ENCODE measurements at regions of chr2 and their contacts with region 1.

Region 1: DNA sequence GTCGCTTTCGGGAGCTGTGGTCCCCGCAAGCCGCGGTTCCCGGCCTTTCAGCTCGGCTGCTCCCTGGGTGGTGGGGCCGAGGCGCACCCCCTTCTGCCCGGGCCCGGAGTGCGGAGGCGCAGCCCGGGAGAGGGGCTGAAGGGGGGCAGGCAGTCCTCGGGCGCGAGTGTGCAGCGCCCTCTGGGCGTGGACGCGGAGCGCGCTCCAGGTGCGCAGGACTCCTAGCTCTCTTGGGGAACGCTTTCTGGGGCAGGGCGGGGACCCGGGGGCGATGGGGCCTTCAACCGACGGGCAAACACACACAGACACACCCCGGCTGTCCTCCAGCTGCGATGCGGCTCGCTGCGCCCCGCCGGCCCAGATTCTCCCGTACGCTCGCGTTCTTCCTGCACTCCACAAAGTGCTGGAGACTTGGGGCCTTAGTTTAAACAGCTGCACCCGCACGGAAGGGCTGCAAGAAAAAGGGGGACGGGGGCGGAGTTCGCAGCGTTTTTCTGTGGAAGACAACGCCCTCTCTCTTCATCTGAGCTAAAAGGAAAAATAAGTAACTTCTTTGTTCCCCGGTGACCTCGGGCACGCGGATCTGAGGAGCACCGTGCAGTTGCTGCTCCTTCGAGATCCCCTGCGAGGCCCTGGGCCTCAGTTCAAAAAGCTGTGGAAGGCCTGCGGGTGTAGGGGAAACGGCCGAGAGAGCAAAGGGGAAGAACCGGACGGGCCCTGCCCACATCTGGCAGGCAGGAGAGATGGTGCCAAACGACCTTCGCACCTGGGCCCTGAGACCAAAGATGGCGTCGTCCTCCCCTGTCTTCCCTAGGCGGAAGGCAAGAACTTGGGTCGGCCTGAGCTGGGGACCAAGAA is 593 bp upstream of the SDC1 start:
- DNase-seq: peak; percentile 88 to 89
- H3K4me3 ChIP-seq: peak overlapping the region; percentile 56
- H3K4me3 Mint-ChIP-seq: peak overlapping the region; percentile 78
- H3K27ac Mint-ChIP-seq: peak overlapping the region; percentile 88
- H3K4me1 ChIP-seq: peaks cover 19% of the 10 kb centered on the region
- H3K4me1 Mint-ChIP-seq: peaks cover 13% of the 10 kb centered on the region
- H3K27me3 ChIP-seq: no peaks in the 10 kb centered on the region
- H3K27me3 Mint-ChIP-seq: no peaks in the 10 kb centered on the region
- CTCF ChIP-seq: peak; percentile 60 to 83

Region 2: DNA sequence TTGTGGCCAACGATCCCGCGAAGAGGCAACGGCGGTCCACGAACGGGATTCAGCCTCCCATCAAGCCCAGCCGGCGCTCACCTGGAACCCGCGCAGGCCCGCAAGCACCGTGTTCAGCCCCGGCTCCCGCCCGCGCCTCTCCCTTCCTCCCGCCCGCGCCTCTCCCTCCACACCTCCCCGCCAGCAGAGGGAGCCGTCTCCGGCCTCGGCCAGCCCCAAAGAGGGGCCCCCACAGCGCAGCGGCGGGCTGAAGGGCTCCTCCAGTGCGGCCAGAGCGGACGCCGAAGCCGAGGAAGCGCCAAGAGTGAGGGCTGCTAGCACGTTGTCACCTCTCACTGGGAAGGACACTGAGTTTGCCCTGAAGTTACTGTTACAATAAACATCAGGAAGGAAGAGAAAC is 118.8 kb before region 1 on chr2:
- CTCF ChIA-PET with region 1: interaction called, 11 read pairs
- POLR2A ChIA-PET with region 1: no interaction called
- intact Hi-C with region 1: loop called (anchors 1 kb)
- DNase-seq: no peak
- H3K4me3 ChIP-seq: no peak overlapping the region
- H3K4me3 Mint-ChIP-seq: no peak overlapping the region
- H3K27ac Mint-ChIP-seq: no peak overlapping the region
- H3K4me1 ChIP-seq: peaks cover 15% of the 10 kb centered on the region
- H3K4me1 Mint-ChIP-seq: peaks cover 19% of the 10 kb centered on the region
- H3K27me3 ChIP-seq: no peaks in the 10 kb centered on the region
- H3K27me3 Mint-ChIP-seq: no peaks in the 10 kb centered on the region
- CTCF ChIP-seq: peak in 1 of 2 experiments; percentile 23

Region 3: GRCh38 chr2:20179755-20180594 is 45.5 kb before region 1 on chr2:
- CTCF ChIA-PET with region 1: interaction called, 13 read pairs
- POLR2A ChIA-PET with region 1: interaction called, 3 read pairs
- intact Hi-C with region 1: loop called (anchors 2 kb)
- DNase-seq: peak in 1 of 2 experiments; percentile 54
- H3K4me3 ChIP-seq: no peak overlapping the region
- H3K4me3 Mint-ChIP-seq: no peak overlapping the region
- H3K27ac Mint-ChIP-seq: no peak overlapping the region
- H3K4me1 ChIP-seq: peaks cover 26% of the 10 kb centered on the region
- H3K4me1 Mint-ChIP-seq: peaks cover 20% of the 10 kb centered on the region
- H3K27me3 ChIP-seq: no peaks in the 10 kb centered on the region
- H3K27me3 Mint-ChIP-seq: no peaks in the 10 kb centered on the region
- CTCF ChIP-seq: no peak

Region 4: DNA sequence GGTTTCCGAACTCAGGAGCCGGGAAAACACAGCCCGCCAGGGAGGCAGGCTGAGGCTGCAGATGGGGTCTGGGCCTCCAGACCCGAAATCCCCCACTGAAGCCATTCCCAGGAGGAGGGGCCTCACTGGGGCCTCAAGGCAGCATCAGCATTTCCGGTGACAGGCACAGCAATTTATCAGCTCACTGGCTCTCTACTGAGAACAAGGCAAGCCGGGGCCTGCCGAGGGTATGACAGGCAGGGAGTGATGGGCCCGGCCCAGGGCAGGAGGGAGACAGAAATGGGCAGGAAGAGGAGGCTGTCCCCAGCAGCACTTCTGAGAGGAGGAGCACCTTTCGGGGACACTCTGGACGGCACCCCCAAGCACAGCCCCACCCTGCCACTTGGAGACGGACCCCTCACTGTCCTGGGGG is 13.1 kb before region 1 on chr2:
- CTCF ChIA-PET with region 1: interaction called, 27 read pairs
- POLR2A ChIA-PET with region 1: interaction called, 9 read pairs
- intact Hi-C with region 1: loop called (anchors 1 kb)
- DNase-seq: no peak
- H3K4me3 ChIP-seq: no peak overlapping the region
- H3K4me3 Mint-ChIP-seq: no peak overlapping the region
- H3K27ac Mint-ChIP-seq: no peak overlapping the region
- H3K4me1 ChIP-seq: peaks cover 41% of the 10 kb centered on the region
- H3K4me1 Mint-ChIP-seq: peaks cover 22% of the 10 kb centered on the region
- H3K27me3 ChIP-seq: no peaks in the 10 kb centered on the region
- H3K27me3 Mint-ChIP-seq: no peaks in the 10 kb centered on the region
- CTCF ChIP-seq: no peak

Region 5: GRCh38 chr2:20398956-20399567 is 173.5 kb after region 1 on chr2:
- CTCF ChIA-PET with region 1: no interaction called
- POLR2A ChIA-PET with region 1: no interaction called
- intact Hi-C with region 1: no loop called
- DNase-seq: no peak
- H3K4me3 ChIP-seq: no peak overlapping the region
- H3K4me3 Mint-ChIP-seq: no peak overlapping the region
- H3K27ac Mint-ChIP-seq: no peak overlapping the region
- H3K4me1 ChIP-seq: no peaks in the 10 kb centered on the region
- H3K4me1 Mint-ChIP-seq: no peaks in the 10 kb centered on the region
- H3K27me3 ChIP-seq: no peaks in the 10 kb centered on the region
- H3K27me3 Mint-ChIP-seq: no peaks in the 10 kb centered on the region
- CTCF ChIP-seq: no peak

Measured in Caco-2 (cell line).